ENCODE measurements at regions of chr5 and their contacts with region 1.

Region 1: GRCh38 chr5:79133657-79134451 is 22.2 kb downstream of the BHMT start:
- DNase-seq: peak; percentile 61
- CTCF ChIP-seq: peak; percentile 78

Region 2: DNA sequence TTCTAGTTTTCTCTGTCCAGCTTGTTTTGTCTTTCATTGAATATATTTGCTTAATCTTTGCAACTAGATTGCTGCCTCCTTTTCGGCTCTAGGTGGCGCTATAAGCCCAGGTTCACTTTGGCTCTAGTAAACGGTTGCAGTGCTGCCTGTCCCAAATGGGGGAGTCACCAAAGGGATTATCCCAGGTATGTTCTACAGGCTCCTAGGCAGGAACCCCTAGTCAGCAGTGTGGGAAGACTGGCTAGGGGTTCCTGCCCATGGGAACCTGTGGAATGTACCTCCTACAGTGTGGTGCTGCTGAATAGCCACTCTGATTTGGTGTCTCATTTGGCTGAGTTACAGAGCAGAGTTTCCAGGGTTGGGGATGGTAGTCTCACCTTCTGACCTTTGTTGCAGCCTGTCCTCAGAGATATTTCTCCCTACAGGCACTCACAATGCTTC is 233.9 kb before region 1 on chr5:
- CTCF ChIA-PET with region 1: interaction called, 12 read pairs
- POLR2A ChIA-PET with region 1: no interaction called
- DNase-seq: peak; percentile 40
- CTCF ChIP-seq: peak; percentile 46

Region 3: DNA sequence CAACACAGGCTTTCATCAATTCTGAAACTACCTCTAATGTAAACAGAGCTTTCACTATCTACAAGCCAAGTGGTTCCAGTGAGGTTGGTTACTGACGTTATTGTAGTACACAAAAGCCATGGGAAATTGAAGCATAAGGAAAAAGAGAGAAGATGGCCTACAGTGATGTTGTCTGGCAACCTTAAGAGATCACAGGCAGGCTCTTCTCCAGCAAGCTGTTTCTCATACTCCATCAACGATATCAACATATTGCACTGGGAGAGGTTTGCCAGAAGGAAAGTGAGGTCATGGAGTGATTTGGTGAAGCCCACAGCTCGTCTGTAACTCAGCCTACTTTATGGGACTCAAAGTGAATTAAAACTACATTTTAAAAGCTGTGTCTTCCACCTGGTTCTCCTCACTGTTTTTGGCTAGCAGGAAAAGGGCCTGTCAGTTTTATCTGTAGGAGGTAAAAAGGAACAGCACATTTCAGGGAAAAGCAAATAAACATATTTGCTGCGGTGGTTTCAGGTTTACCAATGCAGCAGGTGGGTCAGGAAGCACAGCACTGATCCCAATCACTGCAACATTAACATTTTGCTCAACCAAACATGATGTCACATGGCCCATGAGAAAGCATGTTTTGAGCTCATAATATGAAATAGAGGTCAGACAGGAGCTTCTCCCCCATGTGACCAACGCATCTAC is 221.6 kb before region 1 on chr5:
- CTCF ChIA-PET with region 1: no interaction called
- POLR2A ChIA-PET with region 1: no interaction called
- DNase-seq: no peak
- CTCF ChIP-seq: no peak

Region 4: DNA sequence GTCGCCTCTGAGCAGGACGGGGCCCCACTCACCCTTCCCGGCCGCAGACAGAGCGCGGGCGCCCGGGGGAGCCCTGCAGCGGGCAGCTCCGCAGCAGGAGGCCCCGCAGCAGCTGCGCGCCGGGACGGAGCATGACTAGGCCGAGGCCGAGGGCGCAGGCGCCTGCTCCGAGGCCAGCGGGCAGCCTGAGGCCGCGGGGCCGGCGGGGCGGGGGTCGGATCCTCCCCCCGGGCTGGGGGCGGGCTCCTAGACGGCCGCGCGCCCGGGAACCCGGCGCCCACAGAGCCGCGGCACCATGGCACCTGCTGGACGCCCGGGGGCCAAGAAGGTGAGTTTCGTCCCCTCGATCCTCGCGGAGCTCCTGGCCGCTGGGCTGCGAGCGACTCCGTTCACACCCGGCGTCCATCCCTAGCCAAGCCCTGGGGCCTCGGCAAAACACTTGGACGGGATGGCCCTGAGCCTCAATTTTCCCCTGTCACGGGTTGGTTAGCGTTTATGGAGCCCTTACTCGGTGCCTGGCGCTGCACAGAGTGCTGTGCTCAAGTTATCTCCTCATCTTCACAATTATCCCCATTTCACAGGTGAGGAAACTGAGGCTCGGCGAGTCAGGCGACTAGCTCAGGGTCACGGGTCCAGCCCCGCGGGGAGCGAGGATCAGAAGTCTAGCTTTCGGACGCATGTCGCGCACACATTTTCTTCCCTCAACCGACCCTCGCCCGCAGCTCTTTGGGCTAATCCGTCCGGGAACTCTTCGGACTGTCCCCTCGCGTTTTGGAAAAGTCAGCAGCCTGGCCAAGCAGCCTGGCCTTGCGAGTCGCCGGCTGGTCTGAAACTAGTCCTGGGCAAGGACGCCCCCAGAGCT is 64.1 kb before region 1 on chr5 and contains the starts of genes BHMT2 and DMGDH:
- CTCF ChIA-PET with region 1: interaction called, 11 read pairs
- POLR2A ChIA-PET with region 1: no interaction called
- DNase-seq: no peak
- CTCF ChIP-seq: no peak

Region 5: GRCh38 chr5:79122973-79123372 is 10.9 kb before region 1 on chr5:
- CTCF ChIA-PET with region 1: interaction called, 27 read pairs
- POLR2A ChIA-PET with region 1: no interaction called
- DNase-seq: no peak
- CTCF ChIP-seq: no peak

Region 6: DNA sequence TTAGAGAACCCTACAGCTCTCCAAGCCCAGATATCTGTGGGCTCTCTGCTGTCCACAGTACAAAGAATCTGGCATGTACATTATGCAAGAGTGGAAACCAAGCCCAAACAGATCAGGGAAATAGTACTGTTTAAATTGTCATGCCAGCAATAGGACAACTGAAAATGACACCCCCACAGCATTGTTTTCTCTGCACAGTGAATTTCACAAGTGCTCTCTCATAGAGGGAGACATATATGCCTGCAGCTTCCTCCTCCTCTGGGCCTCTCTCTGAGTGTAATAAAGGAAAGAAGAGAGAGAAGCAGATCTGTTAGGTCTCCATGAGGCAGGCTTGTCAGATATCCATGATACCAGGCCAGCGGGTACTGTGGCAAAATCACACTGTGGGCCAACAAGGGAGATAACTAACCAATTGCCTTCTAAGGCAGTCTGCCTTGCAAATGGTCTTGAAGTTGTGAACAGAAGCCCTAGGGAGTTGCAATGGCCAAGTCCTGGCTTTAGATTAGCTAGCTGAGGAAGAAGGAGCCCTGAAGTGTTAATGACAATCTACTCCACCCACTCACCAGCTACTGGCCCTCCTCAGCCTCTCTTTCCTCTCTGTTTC is 47.7 kb after region 1 on chr5:
- CTCF ChIA-PET with region 1: interaction called, 12 read pairs
- POLR2A ChIA-PET with region 1: no interaction called
- DNase-seq: no peak
- CTCF ChIP-seq: no peak

Region 7: GRCh38 chr5:79464695-79465332 is 331.0 kb after region 1 on chr5:
- CTCF ChIA-PET with region 1: interaction called, 178 read pairs
- POLR2A ChIA-PET with region 1: no interaction called
- DNase-seq: peak; percentile 45
- CTCF ChIP-seq: peak; percentile 58